Activated CD4-positive, alpha-beta memory T cell treated with anti-CD3 and anti-CD28 coated beads for 36 hours (primary cell): ENCODE measurements at regions of chr10 and their contacts with region 1.

Region 1: DNA sequence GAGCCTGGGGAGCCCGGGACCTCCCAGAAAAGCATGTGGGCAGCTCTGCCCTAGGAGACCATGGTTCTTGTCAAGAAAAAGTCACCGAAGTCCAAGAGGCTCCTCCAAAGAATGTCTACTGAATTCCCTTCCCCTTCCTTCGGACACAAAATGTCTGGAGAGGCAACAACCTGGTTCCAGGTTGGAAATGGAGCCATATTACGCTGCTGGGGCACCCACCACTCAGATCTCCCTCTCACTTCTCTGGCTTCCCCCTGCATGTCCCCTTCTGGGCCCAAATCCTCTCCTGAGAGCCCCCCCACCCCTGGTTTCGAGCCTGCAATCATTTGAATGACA is 52.6 kb downstream of the RGS10 start:
- DNase-seq: no peak
- H3K4me3 Mint-ChIP-seq: peak overlapping the region; percentile 23
- H3K27ac Mint-ChIP-seq: peak overlapping the region; percentile 81
- H3K4me1 Mint-ChIP-seq: peaks cover 36% of the 10 kb centered on the region
- H3K27me3 Mint-ChIP-seq: no peaks in the 10 kb centered on the region

Region 2: GRCh38 chr10:119199231-119199992 is 290.5 kb before region 1 on chr10:
- CTCF ChIA-PET with region 1: interaction called, 17 read pairs
- POLR2A ChIA-PET with region 1: no interaction called
- intact Hi-C with region 1: no loop called
- DNase-seq: peak; percentile 60
- H3K4me3 Mint-ChIP-seq: no peak overlapping the region
- H3K27ac Mint-ChIP-seq: no peak overlapping the region
- H3K4me1 Mint-ChIP-seq: peaks cover 13% of the 10 kb centered on the region
- H3K27me3 Mint-ChIP-seq: peaks cover 1% of the 10 kb centered on the region

Region 3: DNA sequence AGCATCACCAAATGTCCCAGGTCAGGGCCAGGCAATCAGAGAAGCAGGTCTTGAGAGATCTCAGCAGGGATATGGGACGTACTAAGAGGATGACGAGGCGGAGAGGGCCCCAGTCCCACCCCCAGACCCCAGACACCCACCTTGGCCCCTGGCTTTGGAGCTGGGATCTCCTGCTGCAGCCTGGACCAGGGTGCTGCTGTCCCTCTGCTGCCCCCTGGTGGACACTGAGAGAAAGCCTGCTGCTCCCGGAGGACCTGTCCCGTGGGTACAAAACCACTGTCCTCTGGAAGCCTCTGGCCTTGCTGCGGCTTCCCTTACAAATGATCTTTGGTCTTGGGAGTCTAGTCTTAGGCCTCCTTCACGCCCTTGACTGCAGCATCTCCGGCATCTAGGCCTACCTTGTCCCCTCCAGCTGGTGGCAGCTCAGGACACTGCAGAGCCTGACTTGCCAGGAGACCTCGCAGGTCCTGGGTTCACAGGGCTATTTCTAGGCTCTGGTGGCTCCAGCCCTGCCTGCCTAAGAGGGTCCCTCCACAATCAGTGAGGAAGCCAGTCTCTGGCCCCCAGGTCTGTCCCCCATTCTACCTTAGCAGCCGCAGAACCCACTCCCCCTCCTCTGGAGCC is 44.5 kb before region 1 on chr10:
- CTCF ChIA-PET with region 1: interaction called, 24 read pairs
- POLR2A ChIA-PET with region 1: no interaction called
- intact Hi-C with region 1: loop called (anchors 2 kb)
- DNase-seq: peak; percentile 87
- H3K4me3 Mint-ChIP-seq: no peak overlapping the region
- H3K27ac Mint-ChIP-seq: no peak overlapping the region
- H3K4me1 Mint-ChIP-seq: no peaks in the 10 kb centered on the region
- H3K27me3 Mint-ChIP-seq: no peaks in the 10 kb centered on the region

Region 4: GRCh38 chr10:119478111-119478802 is 11.7 kb before region 1 on chr10:
- CTCF ChIA-PET with region 1: interaction called, 14 read pairs
- POLR2A ChIA-PET with region 1: interaction called, 3 read pairs
- intact Hi-C with region 1: no loop called
- DNase-seq: peak; percentile 67
- H3K4me3 Mint-ChIP-seq: peak overlapping the region; percentile 17
- H3K27ac Mint-ChIP-seq: peak overlapping the region; percentile 49
- H3K4me1 Mint-ChIP-seq: peaks cover 33% of the 10 kb centered on the region
- H3K27me3 Mint-ChIP-seq: no peaks in the 10 kb centered on the region

Region 5: DNA sequence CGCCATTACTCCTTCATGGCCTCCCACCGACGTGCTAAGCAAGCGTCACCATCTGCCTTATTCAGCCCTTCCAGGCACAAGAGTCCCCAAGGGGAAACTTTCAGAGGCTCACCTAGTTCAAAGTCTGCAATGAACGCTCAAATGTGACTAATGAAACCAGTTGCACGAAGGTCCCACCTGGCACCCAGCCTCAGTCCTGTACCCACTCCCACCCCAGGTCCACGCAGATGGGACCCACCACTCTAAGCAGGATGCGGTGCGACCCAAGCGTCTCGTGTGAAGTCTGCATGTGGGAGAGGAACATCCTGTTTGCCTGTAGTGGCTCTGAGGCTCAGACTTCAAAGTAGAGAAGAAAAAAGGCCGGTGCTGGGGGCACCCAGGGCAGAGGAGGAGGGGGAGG is 12.2 kb after region 1 on chr10:
- CTCF ChIA-PET with region 1: interaction called, 29 read pairs
- POLR2A ChIA-PET with region 1: no interaction called
- intact Hi-C with region 1: no loop called
- DNase-seq: peak; percentile 88
- H3K4me3 Mint-ChIP-seq: peak overlapping the region; percentile 59
- H3K27ac Mint-ChIP-seq: peak overlapping the region; percentile 99
- H3K4me1 Mint-ChIP-seq: peaks cover 83% of the 10 kb centered on the region
- H3K27me3 Mint-ChIP-seq: no peaks in the 10 kb centered on the region

Region 6: GRCh38 chr10:119596537-119597404 is 106.8 kb after region 1 on chr10 and contains the start of gene TIAL1:
- CTCF ChIA-PET with region 1: no interaction called
- POLR2A ChIA-PET with region 1: no interaction called
- intact Hi-C with region 1: loop called (anchors 5 kb)
- DNase-seq: peak; percentile 97
- H3K4me3 Mint-ChIP-seq: peak within 1 kb of the TSS; percentile 89
- H3K27ac Mint-ChIP-seq: peak within 1 kb of the TSS; percentile 97
- H3K4me1 Mint-ChIP-seq: peaks cover 42% of the 10 kb centered on the region
- H3K27me3 Mint-ChIP-seq: no peaks in the 10 kb centered on the region
- total RNA-seq, gene TIAL1: 177 TPM